Dorsolateral prefrontal cortex (tissue), 120 donors: ENCODE measurements at regions of chr5 and their contacts with region 1.

Region 1: GRCh38 chr5:147887024-147887627 is 8.6 kb downstream of the SCGB3A2 start:
- DNase-seq: peak in 1 of 10 donors; percentile 19
- H3K4me3 ChIP-seq: no peak overlapping the region
- H3K27ac ChIP-seq: no peak overlapping the region
- H3K27me3 ChIP-seq: peaks cover 0 to 16% (median 0%) of the 10 kb centered on the region in 45 donors
- CTCF ChIP-seq: peak in 54 of 56 donors; percentile 24 to 82 (median 54)

Region 2: GRCh38 chr5:147613359-147613758 is 273.8 kb before region 1 on chr5:
- intact Hi-C with region 1: no loop called
- DNase-seq: no peak
- H3K4me3 ChIP-seq: no peak overlapping the region
- H3K27ac ChIP-seq: no peak overlapping the region
- H3K27me3 ChIP-seq: no peaks in the 10 kb centered on the region
- CTCF ChIP-seq: no peak

Region 3: DNA sequence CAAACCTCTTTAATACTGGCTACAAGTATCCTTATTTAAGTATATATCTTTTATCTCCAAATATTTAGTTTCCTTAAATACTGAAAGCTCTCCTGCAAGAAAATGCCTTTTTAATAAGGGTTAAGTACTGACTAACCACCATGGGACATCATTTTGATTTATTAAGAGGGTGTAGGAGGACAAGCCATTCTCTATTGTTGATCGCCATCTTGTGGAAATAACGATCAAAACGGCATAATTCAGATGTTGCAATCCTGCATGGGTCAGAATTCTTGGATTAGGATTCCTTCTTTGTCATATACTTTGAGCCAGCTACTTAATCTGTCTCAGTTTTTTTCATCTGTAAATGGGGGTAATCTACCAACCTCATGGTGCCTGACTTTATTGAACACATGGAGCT is 47.9 kb after region 1 on chr5:
- intact Hi-C with region 1: loop called in 1 of 2 experiments (anchors 2 kb)
- DNase-seq: peak in 1 of 10 donors; percentile 28
- H3K4me3 ChIP-seq: no peak overlapping the region
- H3K27ac ChIP-seq: no peak overlapping the region
- H3K27me3 ChIP-seq: peaks cover 0 to 1% (median 0%) of the 10 kb centered on the region in 45 donors
- CTCF ChIP-seq: peak in 55 of 56 donors; percentile 20 to 76 (median 53)